ENCODE measurements at regions of chr6 and their contacts with region 1.

Region 1: DNA sequence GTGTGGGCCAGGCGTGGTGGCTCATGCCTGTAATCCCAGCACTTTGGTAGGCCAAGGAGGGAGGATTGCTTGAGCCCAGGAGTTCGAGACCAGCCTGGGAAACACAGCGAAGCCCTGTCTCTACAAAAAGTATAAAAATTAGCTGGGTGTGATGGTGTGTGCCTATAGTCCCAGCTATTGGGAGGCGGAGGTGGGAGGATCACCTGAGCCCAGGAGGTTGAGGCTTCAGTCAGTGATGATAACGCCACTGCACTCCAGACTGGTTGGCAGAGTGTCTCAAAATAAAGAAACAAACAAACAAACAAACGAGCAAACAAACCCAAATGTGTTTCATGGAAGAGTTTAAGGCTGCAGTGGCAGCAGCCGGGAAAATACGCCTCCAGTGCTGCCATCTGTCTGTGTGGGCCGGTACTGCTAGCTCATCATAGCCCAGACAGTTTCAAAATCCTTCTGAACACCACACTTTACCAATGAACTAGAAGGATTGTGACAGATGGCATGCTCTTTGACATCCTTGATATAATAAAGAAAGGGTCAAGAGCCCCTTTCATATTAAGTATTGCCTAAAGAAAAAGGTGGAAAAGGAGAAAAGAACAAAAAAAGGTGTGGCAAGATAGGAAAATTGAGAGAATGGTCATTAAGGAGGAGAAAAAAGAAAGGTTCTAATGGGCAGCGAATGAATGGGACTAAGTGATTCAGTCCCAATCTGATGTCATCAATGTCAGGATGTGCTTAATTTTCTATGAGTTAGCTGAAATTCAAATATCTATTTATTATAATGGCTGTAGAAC is 298.6 kb downstream of the SYNE1 start:
- DNase-seq: no peak
- ATAC-seq: peak; percentile 93
- H3K4me3 ChIP-seq: no peak overlapping the region
- H3K27ac ChIP-seq: no peak overlapping the region
- H3K4me1 ChIP-seq: no peaks in the 10 kb centered on the region
- H3K27me3 ChIP-seq: no peaks in the 10 kb centered on the region; a peak in 1 of 4 replicates
- CTCF ChIP-seq: peak; percentile 85 to 93 (median 93)
- EP300 ChIP-seq: no peak
- POLR2A ChIP-seq: no peak
- RAD21 ChIP-seq: peak; percentile 71

Region 2: GRCh38 chr6:151675746-151676416 is 662.6 kb before region 1 on chr6:
- CTCF ChIA-PET with region 1: interaction called, 20 read pairs
- POLR2A ChIA-PET with region 1: no interaction called
- RAD21 ChIA-PET with region 1: interaction called, 13 read pairs
- SMC1A ChIA-PET with region 1: interaction called, 8 read pairs
- in situ Hi-C with region 1: no loop called
- intact Hi-C with region 1: no loop called
- DNase-seq: peak; percentile 11
- ATAC-seq: peak; percentile 96
- H3K4me3 ChIP-seq: no peak overlapping the region
- H3K27ac ChIP-seq: no peak overlapping the region
- H3K4me1 ChIP-seq: peaks cover 5% of the 10 kb centered on the region; the same call in 1 of the 2 replicates
- H3K27me3 ChIP-seq: no peaks in the 10 kb centered on the region
- CTCF ChIP-seq: peak; percentile 95 to 99 (median 96)
- EP300 ChIP-seq: no peak
- POLR2A ChIP-seq: no peak
- RAD21 ChIP-seq: peak; percentile 90

Region 3: GRCh38 chr6:152206072-152206818 is 132.3 kb before region 1 on chr6:
- CTCF ChIA-PET with region 1: interaction called, 4 read pairs
- POLR2A ChIA-PET with region 1: no interaction called
- RAD21 ChIA-PET with region 1: no interaction called
- SMC1A ChIA-PET with region 1: no interaction called
- in situ Hi-C with region 1: no loop called
- intact Hi-C with region 1: loop called (anchors 2 kb)
- DNase-seq: no peak
- ATAC-seq: peak; percentile 55; the same call in 2 of the 3 replicates
- H3K4me3 ChIP-seq: no peak overlapping the region
- H3K27ac ChIP-seq: no peak overlapping the region
- H3K4me1 ChIP-seq: no peaks in the 10 kb centered on the region
- H3K27me3 ChIP-seq: no peaks in the 10 kb centered on the region
- CTCF ChIP-seq: peak; percentile 17 to 50 (median 48); a peak in 4 of 6 replicates
- EP300 ChIP-seq: no peak
- POLR2A ChIP-seq: no peak
- RAD21 ChIP-seq: no peak

Region 4: DNA sequence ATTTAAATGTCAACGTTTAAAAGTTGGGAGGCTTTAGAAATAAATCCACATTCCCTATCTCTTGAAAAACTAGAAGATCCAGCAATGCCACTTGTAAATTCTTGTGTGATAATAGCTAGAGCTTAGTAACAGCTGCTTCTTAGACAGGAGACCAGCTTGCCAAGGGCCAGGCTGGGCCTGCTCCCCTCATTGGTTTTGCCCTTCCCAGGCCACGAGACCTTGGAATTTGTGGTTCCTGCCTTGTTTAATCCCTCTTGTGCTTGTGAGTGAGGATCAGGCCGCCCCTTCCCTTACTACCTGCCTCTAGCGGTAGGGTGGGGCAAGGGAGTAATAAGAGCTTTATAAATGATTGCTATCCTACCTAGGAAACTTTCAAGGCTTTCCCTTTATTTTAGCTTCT is 64.9 kb before region 1 on chr6:
- CTCF ChIA-PET with region 1: interaction called, 14 read pairs
- POLR2A ChIA-PET with region 1: no interaction called
- RAD21 ChIA-PET with region 1: interaction called, 14 read pairs
- SMC1A ChIA-PET with region 1: interaction called, 16 read pairs
- in situ Hi-C with region 1: no loop called
- intact Hi-C with region 1: loop called (anchors 2 kb)
- DNase-seq: no peak
- ATAC-seq: no peak
- H3K4me3 ChIP-seq: no peak overlapping the region
- H3K27ac ChIP-seq: no peak overlapping the region
- H3K4me1 ChIP-seq: peaks cover 9% of the 10 kb centered on the region; the same call in 1 of the 2 replicates
- H3K27me3 ChIP-seq: no peaks in the 10 kb centered on the region
- CTCF ChIP-seq: no peak
- EP300 ChIP-seq: no peak
- POLR2A ChIP-seq: no peak
- RAD21 ChIP-seq: no peak

Region 5: GRCh38 chr6:152301764-152302568 is 36.6 kb before region 1 on chr6:
- CTCF ChIA-PET with region 1: interaction called, 52 read pairs
- POLR2A ChIA-PET with region 1: interaction called, 3 read pairs
- RAD21 ChIA-PET with region 1: interaction called, 100 read pairs
- SMC1A ChIA-PET with region 1: interaction called, 83 read pairs
- in situ Hi-C with region 1: no loop called
- intact Hi-C with region 1: loop called (anchors 1 kb)
- DNase-seq: peak; percentile 74
- ATAC-seq: peak; percentile 92
- H3K4me3 ChIP-seq: peak overlapping the region; percentile 72
- H3K27ac ChIP-seq: peak overlapping the region; percentile 84
- H3K4me1 ChIP-seq: peaks cover 6% of the 10 kb centered on the region
- H3K27me3 ChIP-seq: no peaks in the 10 kb centered on the region
- CTCF ChIP-seq: peak; percentile 51 to 56 (median 53)
- EP300 ChIP-seq: no peak; a peak in 2 of 4 replicates
- POLR2A ChIP-seq: peak; percentile 92
- RAD21 ChIP-seq: peak; percentile 50

Region 6: DNA sequence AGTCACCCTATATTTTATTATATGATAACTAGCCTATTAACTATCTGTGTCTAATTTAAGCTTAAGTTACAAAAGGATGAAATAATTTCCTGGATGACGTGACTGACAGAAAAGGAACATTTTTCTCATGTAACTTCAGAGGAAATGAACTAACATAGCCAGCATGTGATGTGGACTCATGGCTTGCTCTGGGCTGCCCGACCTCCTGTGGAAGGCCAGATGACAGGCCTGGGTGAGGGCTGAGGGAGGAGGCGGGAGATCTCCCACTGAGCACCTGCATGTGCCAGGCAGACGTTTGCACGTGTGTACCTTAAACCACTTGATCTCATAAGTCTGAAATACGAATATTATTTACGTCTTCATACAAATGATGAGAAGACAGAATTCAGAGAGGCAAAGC is 22.5 kb before region 1 on chr6:
- CTCF ChIA-PET with region 1: interaction called, 18 read pairs
- POLR2A ChIA-PET with region 1: no interaction called
- RAD21 ChIA-PET with region 1: interaction called, 5 read pairs
- SMC1A ChIA-PET with region 1: interaction called, 5 read pairs
- in situ Hi-C with region 1: no loop called
- intact Hi-C with region 1: no loop called
- DNase-seq: no peak
- ATAC-seq: no peak
- H3K4me3 ChIP-seq: no peak overlapping the region
- H3K27ac ChIP-seq: no peak overlapping the region
- H3K4me1 ChIP-seq: peaks cover 9% of the 10 kb centered on the region
- H3K27me3 ChIP-seq: no peaks in the 10 kb centered on the region; a peak in 2 of 4 replicates
- CTCF ChIP-seq: no peak
- EP300 ChIP-seq: no peak
- POLR2A ChIP-seq: no peak
- RAD21 ChIP-seq: no peak

Region 7: DNA sequence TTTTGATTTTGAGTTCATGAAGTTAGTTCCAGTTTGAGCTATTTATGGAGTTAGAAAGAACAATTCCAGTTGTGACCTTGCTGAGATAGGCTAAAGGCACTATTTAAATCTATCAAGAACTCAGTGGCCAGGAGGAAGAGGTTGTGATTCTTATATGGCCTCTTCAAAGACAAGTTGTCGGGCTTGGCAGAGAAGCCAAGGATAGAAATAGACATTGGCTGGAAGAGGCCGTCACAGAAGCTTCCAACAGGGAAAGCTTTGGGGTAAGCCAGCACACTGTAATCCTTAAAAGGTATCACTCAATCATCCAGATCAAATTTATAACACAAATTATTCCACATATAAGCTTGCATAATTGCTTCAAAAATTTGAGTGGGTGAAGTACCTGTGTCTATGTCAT is 12.6 kb after region 1 on chr6:
- CTCF ChIA-PET with region 1: interaction called, 14 read pairs
- POLR2A ChIA-PET with region 1: no interaction called
- RAD21 ChIA-PET with region 1: interaction called, 5 read pairs
- SMC1A ChIA-PET with region 1: interaction called, 5 read pairs
- in situ Hi-C with region 1: no loop called
- intact Hi-C with region 1: no loop called
- DNase-seq: no peak
- ATAC-seq: no peak
- H3K4me3 ChIP-seq: no peak overlapping the region
- H3K27ac ChIP-seq: no peak overlapping the region
- H3K4me1 ChIP-seq: no peaks in the 10 kb centered on the region
- H3K27me3 ChIP-seq: no peaks in the 10 kb centered on the region; a peak in 1 of 4 replicates
- CTCF ChIP-seq: no peak
- EP300 ChIP-seq: no peak
- POLR2A ChIP-seq: no peak
- RAD21 ChIP-seq: no peak

Measured in GM12878 (cell line).